ENCODE measurements at regions of chr12 and their contacts with region 1.

Region 1: GRCh38 chr12:54958048-54958658 is 26.4 kb downstream of the TESPA1 start:
- DNase-seq: peak; percentile 55
- H3K4me3 Mint-ChIP-seq: no peak overlapping the region
- H3K27ac Mint-ChIP-seq: peak overlapping the region; percentile 93
- H3K4me1 Mint-ChIP-seq: peaks cover 86% of the 10 kb centered on the region
- H3K27me3 Mint-ChIP-seq: no peaks in the 10 kb centered on the region

Region 2: GRCh38 chr12:54658306-54659264 is 299.6 kb before region 1 on chr12:
- CTCF ChIA-PET with region 1: interaction called, 19 read pairs
- POLR2A ChIA-PET with region 1: no interaction called
- intact Hi-C with region 1: no loop called
- DNase-seq: peak; percentile 64
- H3K4me3 Mint-ChIP-seq: no peak overlapping the region
- H3K27ac Mint-ChIP-seq: no peak overlapping the region
- H3K4me1 Mint-ChIP-seq: no peaks in the 10 kb centered on the region
- H3K27me3 Mint-ChIP-seq: peaks cover 8% of the 10 kb centered on the region

Region 3: DNA sequence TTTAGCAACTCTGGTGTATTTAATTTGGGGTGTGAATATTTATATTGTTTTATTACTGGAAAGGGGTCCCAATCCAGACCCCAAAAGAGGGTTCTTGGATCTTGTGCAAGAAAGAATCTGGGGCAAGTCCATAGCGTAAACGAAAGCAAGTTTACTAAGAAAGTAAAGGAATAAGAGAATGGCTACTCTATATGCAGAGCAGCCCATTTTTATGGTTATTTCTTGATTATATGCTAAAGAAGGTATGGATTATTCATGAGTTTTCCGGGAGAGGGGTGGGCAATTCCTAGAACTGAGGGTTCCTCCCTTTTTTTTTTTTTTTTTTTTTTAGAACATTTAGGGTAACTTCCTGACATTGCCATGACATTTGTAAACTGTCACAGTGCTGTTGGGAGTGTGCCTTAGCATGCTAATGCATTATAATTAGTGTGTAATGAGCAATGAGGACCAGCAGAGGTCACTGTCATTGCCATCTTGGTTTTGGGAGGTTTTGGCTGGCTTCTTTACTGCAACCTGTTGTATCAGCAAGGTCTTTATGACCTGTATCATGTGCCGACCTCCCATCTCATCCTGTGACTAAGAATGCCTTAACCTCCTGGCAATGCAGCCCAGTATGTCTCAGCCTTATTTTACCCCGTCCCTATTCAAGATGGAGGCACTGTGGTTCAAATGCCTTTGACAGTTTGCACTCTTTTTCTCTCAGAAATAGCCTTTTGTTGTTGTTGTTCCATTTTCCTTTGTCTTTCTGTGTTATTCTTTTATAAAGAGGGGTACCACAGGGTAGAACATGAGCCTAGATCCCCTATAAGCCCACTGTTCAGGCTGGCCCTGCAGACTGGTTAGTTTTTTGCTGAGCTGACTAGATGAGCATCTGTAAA is 234.5 kb before region 1 on chr12:
- CTCF ChIA-PET with region 1: interaction called, 11 read pairs
- POLR2A ChIA-PET with region 1: no interaction called
- intact Hi-C with region 1: no loop called
- DNase-seq: peak; percentile 32
- H3K4me3 Mint-ChIP-seq: no peak overlapping the region
- H3K27ac Mint-ChIP-seq: no peak overlapping the region
- H3K4me1 Mint-ChIP-seq: peaks cover 13% of the 10 kb centered on the region
- H3K27me3 Mint-ChIP-seq: peaks cover 2% of the 10 kb centered on the region

Region 4: GRCh38 chr12:54853995-54854566 is 104.1 kb before region 1 on chr12 and contains the start of gene MUCL1:
- CTCF ChIA-PET with region 1: interaction called, 161 read pairs
- POLR2A ChIA-PET with region 1: no interaction called
- intact Hi-C with region 1: loop called (anchors 1 kb)
- DNase-seq: peak; percentile 80
- H3K4me3 Mint-ChIP-seq: no peak within 1 kb of the TSS
- H3K27ac Mint-ChIP-seq: no peak within 1 kb of the TSS
- H3K4me1 Mint-ChIP-seq: peaks cover 17% of the 10 kb centered on the region
- H3K27me3 Mint-ChIP-seq: peaks cover 2% of the 10 kb centered on the region
- total RNA-seq, gene MUCL1: not detected

Region 5: GRCh38 chr12:54891717-54892554 is 66.2 kb before region 1 on chr12:
- CTCF ChIA-PET with region 1: no interaction called
- POLR2A ChIA-PET with region 1: no interaction called
- intact Hi-C with region 1: no loop called
- DNase-seq: no peak
- H3K4me3 Mint-ChIP-seq: no peak overlapping the region
- H3K27ac Mint-ChIP-seq: no peak overlapping the region
- H3K4me1 Mint-ChIP-seq: no peaks in the 10 kb centered on the region
- H3K27me3 Mint-ChIP-seq: peaks cover 3% of the 10 kb centered on the region

Region 6: GRCh38 chr12:54977155-54977554 is 19.0 kb after region 1 on chr12:
- CTCF ChIA-PET with region 1: interaction called, 32 read pairs
- POLR2A ChIA-PET with region 1: interaction called, 4 read pairs
- intact Hi-C with region 1: loop called (anchors 1 kb)
- DNase-seq: no peak
- H3K4me3 Mint-ChIP-seq: peak overlapping the region; percentile 57
- H3K27ac Mint-ChIP-seq: peak overlapping the region; percentile 85
- H3K4me1 Mint-ChIP-seq: peaks cover 90% of the 10 kb centered on the region
- H3K27me3 Mint-ChIP-seq: no peaks in the 10 kb centered on the region

Region 7: DNA sequence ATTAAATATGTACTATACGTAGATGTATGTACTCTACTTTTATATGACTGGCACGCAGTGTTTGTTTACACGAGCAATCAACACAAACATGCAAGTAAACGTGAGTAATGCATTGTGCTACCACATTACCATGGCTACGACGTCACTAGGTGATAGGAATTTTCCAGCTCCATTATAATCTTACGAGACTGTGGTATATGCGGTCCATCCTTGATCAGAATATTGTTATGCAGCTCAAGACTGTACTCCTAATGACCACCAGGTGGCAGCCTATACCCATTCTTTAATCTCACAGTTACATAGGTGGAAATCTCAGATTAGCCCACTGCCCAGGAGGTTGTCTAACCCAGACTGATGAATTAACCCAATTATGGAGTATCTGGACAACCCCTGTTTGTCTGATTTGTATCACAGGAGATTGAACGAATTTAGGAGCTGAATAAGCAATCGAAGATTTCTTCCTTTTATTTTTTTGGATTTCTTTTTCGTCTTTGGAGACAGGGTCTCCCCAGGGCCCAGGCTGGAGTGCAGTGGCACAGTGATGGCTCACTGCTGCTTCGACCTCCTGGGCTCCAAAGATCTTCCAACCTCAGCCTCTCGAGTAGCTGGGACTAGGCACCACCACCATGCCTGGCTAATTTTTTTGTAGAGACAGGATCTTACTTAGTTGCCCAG is 35.1 kb after region 1 on chr12:
- CTCF ChIA-PET with region 1: interaction called, 40 read pairs
- POLR2A ChIA-PET with region 1: no interaction called
- intact Hi-C with region 1: no loop called
- DNase-seq: peak; percentile 57
- H3K4me3 Mint-ChIP-seq: no peak overlapping the region
- H3K27ac Mint-ChIP-seq: no peak overlapping the region
- H3K4me1 Mint-ChIP-seq: peaks cover 43% of the 10 kb centered on the region
- H3K27me3 Mint-ChIP-seq: no peaks in the 10 kb centered on the region

Measured in activated CD4-positive, alpha-beta memory T cell treated with anti-CD3 and anti-CD28 coated beads for 36 hours (primary cell).